Heart right ventricle (tissue), 16 donors: ENCODE measurements at regions of chr12 and their contacts with region 1.

Region 1: DNA sequence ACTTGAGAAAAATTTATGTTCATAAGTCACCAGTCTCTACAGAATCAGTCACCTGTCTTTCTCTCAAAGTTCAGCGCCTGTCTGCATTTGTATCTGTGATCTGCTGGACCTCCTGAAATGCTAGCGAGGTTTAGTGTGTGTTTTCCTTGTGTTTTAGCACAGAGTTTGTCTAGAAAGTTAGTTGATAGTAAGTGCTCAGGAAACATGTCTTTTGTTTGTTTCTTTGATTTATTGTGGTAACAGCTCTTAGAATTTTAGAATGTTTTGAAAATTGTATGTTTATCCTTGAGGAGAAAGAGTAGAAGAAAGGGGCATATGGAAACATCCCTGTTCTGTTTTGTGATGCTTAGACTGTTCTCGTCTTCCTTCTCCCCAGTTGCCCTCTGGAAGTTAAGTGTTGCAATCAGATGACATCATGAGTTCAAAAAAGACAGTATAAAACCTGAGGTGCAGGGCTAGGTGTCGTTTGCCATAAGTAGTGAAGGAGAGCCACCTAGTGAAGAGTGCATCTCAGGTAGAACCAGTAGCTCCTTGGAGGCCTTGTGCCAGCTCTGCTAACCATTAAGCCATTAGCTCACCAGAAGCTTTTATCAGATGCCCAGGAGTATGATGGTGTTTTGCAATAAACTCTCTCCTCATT is 44.8 kb downstream of the FBXW8 start:
- DNase-seq: no peak
- ATAC-seq: peak in 5 of 8 donors; percentile 31 to 63 (median 40)
- H3K4me3 ChIP-seq: no peak overlapping the region
- H3K27ac ChIP-seq: peak overlapping the region in 2 of 10 donors; percentile 25 to 56
- H3K4me1 ChIP-seq: peaks cover 0 to 39% (median 12%) of the 10 kb centered on the region in 9 donors
- H3K27me3 ChIP-seq: no peaks in the 10 kb centered on the region
- CTCF ChIP-seq: peak in 2 of 9 donors; percentile 24 to 28

Region 2: GRCh38 chr12:116990971-116991966 is 35.8 kb after region 1 on chr12:
- intact Hi-C with region 1: loop called in 1 of 10 experiments (anchors 5 kb)
- DNase-seq: no peak
- ATAC-seq: peak in 4 of 8 donors; percentile 36 to 51 (median 48)
- H3K4me3 ChIP-seq: no peak overlapping the region
- H3K27ac ChIP-seq: peak overlapping the region in 6 of 10 donors; percentile 3 to 79 (median 64)
- H3K4me1 ChIP-seq: peaks cover 0 to 43% (median 7%) of the 10 kb centered on the region in 9 donors
- H3K27me3 ChIP-seq: no peaks in the 10 kb centered on the region
- CTCF ChIP-seq: no peak